ENCODE measurements at regions of chr16 and their contacts with region 1.

Region 1: DNA sequence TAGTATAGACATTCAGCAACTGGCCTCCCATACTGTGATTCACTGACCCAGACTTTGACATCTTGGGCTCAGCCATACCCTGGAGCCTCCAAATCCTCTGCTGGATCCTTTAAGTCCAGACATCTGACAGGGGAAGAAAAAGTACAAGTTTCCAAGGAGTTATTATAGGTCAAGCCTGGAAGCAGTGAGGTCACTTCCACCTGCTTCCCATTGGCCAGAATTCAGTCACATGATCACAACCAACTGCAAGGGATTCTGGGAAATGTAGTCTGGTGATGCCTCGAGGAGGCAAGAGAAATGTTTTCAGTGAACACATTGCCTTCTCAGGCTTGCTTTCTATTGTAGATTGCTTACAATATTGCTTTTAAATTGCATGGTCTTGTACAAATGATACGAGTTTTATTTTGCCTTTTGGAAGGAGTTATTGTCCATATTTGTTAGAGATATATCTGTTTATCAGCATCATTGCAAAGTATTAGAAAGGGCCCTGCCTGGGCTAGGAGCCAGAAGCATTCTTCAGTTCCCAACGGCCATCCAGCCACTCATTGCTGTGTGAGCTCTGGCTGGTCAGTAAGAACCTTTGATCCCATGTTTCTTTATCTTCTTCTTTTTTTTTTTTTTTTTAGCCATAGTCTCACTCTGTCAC is 696.9 kb downstream of the WWOX start:
- DNase-seq: peak in 1 of 2 donors; percentile 69
- ATAC-seq: peak; percentile 73 to 95 (median 85)
- H3K4me3 ChIP-seq: peak overlapping the region in 1 of 10 donors; percentile 2
- H3K27ac ChIP-seq: peak overlapping the region in 3 of 10 donors; percentile 20 to 53 (median 32)
- H3K4me1 ChIP-seq: peaks cover 0 to 15% (median 0%) of the 10 kb centered on the region in 9 donors
- H3K27me3 ChIP-seq: no peaks in the 10 kb centered on the region
- CTCF ChIP-seq: no peak

Region 2: DNA sequence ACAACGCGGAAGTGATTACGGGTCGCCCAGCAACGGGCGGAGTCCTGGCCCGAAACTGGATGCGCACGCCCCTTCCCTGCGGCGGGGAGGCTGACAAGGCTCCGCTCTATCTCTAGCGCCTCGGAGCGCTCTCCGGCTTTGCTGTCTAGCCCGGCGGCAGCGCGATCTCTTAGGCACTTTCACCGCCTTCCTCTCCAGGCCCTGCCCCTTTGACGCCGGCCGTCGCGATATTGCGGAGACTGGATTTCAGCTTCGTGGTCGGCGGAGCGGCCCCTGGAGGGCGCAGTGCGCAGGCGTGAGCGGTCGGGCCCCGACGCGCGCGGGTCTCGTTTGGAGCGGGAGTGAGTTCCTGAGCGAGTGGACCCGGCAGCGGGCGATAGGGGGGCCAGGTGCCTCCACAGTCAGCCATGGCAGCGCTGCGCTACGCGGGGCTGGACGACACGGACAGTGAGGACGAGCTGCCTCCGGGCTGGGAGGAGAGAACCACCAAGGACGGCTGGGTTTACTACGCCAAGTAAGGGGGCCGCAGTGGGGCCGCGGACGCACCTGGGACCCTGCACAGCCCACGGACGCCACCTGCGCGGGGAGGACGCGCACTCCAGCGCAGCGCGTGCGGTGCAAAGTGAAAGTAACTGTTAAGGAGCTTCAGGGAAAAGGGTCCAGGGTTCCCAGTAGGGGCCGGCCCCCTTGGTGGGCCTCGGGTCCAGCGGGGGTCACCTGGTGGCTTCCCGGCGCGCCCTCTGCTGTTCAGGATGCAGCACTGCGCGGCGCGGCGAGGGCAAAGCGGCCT is 696.8 kb before region 1 on chr16 and contains the start of gene WWOX:
- intact Hi-C with region 1: loop called in 1 of 10 experiments (anchors 10 kb)
- DNase-seq: peak; percentile 95 to 96
- ATAC-seq: peak; percentile 97 to 99 (median 98)
- H3K4me3 ChIP-seq: peak within 1 kb of the TSS; percentile 69 to 100 (median 82)
- H3K27ac ChIP-seq: peak within 1 kb of the TSS; percentile 14 to 92 (median 88)
- H3K4me1 ChIP-seq: peaks cover 3 to 15% (median 8%) of the 10 kb centered on the region in 9 donors
- H3K27me3 ChIP-seq: peaks cover 0 to 8% (median 0%) of the 10 kb centered on the region in 7 donors
- CTCF ChIP-seq: peak; percentile 57 to 89 (median 82)
- total RNA-seq, gene WWOX: 6.1 to 15.0 (median 10.3) TPM

Region 3: GRCh38 chr16:78639775-78640174 is 156.6 kb before region 1 on chr16:
- intact Hi-C with region 1: no loop called
- DNase-seq: no peak
- ATAC-seq: no peak
- H3K4me3 ChIP-seq: no peak overlapping the region
- H3K27ac ChIP-seq: no peak overlapping the region
- H3K4me1 ChIP-seq: no peaks in the 10 kb centered on the region
- H3K27me3 ChIP-seq: no peaks in the 10 kb centered on the region
- CTCF ChIP-seq: no peak

Region 4: DNA sequence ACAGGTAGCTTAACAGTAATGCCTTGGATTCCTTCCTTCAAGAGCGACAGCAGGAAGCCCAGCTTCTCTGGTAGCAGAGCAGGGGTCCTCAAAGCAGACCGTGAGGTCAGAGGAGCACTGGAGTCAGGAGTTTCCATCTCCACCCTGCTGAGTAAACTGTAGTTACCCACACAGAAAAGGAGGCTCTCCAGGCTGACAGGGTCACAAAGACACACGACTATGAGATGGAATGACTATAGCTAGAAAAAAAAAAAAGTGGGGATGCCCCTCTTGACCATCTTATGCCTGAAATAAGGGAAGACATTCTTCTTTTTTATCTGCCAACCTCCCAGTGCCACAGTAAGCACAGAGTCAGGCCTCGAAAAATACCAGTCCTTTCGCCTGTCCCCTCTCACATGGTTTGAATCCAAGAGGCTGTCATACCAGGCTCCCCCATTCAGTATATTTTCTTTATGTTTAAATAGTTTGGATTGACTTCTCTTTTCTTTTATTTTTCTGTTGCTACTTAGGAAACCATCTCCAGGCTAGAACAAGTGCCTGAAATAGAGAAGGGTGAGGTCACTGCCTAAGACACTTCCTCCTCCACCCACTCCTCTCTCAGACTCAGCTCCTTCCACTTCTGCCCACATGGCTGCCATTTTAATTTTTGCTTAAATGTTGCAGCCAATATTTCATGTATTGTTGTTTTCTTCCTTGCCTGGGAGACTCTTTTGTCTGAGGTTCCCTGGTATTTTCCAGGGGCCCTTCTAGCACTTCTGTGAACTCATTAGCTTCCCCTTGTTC is 96.8 kb after region 1 on chr16:
- intact Hi-C with region 1: no loop called
- DNase-seq: no peak
- ATAC-seq: peak in 3 of 8 donors; percentile 42 to 47 (median 46)
- H3K4me3 ChIP-seq: no peak overlapping the region
- H3K27ac ChIP-seq: peak overlapping the region in 1 of 10 donors; percentile 57
- H3K4me1 ChIP-seq: peaks cover 0 to 8% (median 0%) of the 10 kb centered on the region in 9 donors
- H3K27me3 ChIP-seq: no peaks in the 10 kb centered on the region
- CTCF ChIP-seq: no peak